Natural killer cell (primary cell): ENCODE measurements at regions of chr3 and their contacts with region 1.

Region 1: DNA sequence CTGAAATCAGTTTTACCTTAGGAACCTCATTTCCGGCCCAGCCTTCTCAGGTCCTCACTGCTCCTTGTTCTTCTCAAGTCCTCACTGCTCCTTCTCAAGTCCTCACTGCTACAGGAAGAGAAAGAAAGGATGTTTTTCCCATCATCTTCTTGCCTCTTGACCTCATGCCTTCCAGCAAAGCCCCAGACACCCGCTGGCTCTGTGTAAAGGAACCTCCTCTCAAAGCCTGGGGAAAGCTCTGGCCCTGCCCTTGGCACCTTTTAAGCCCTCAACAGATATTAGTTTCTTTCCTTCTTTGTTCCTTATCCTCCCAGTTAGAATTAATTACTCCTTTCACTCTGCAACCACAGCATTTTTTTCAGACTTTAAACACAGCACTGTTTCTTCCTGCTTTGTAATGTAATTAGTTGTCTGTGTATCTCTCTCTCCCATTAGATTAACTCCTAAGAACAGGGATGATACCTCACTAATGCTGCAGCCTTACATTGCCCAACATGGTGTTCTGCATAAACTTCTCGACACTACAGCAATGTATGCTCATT is 4.0 kb upstream of the WDR49 start:
- DNase-seq: no peak
- ATAC-seq: no peak
- H3K4me3 ChIP-seq: no peak overlapping the region
- H3K4me3 Mint-ChIP-seq: no peak overlapping the region
- H3K27ac ChIP-seq: no peak overlapping the region
- H3K27ac Mint-ChIP-seq: no peak overlapping the region
- H3K4me1 ChIP-seq: no peaks in the 10 kb centered on the region
- H3K4me1 Mint-ChIP-seq: peaks cover 10% of the 10 kb centered on the region in 2 donors
- H3K27me3 ChIP-seq: no peaks in the 10 kb centered on the region
- H3K27me3 Mint-ChIP-seq: no peaks in the 10 kb centered on the region
- CTCF ChIP-seq: no peak

Region 2: GRCh38 chr3:167644611-167645010 is 13.1 kb before region 1 on chr3:
- intact Hi-C with region 1: loop called (anchors 2 kb)
- DNase-seq: no peak
- ATAC-seq: no peak
- H3K4me3 ChIP-seq: no peak overlapping the region
- H3K4me3 Mint-ChIP-seq: no peak overlapping the region
- H3K27ac ChIP-seq: no peak overlapping the region
- H3K27ac Mint-ChIP-seq: no peak overlapping the region
- H3K4me1 ChIP-seq: peaks cover under 1% of the 10 kb centered on the region
- H3K4me1 Mint-ChIP-seq: peaks cover 2 to 9% of the 10 kb centered on the region in 2 donors
- H3K27me3 ChIP-seq: no peaks in the 10 kb centered on the region
- H3K27me3 Mint-ChIP-seq: peaks cover 3 to 8% of the 10 kb centered on the region in 2 donors
- CTCF ChIP-seq: no peak